ENCODE measurements at regions of chr4 and their contacts with region 1.

Region 1: GRCh38 chr4:80365928-80366327 is 30.4 kb downstream of the CFAP299 start:
- DNase-seq: peak in 1 of 2 experiments; percentile 53
- H3K4me3 ChIP-seq: no peak overlapping the region
- H3K4me3 Mint-ChIP-seq: no peak overlapping the region
- H3K27ac Mint-ChIP-seq: no peak overlapping the region
- H3K4me1 ChIP-seq: no peaks in the 10 kb centered on the region
- H3K4me1 Mint-ChIP-seq: no peaks in the 10 kb centered on the region
- H3K27me3 ChIP-seq: no peaks in the 10 kb centered on the region
- H3K27me3 Mint-ChIP-seq: peaks cover 2% of the 10 kb centered on the region
- CTCF ChIP-seq: peak; percentile 47 to 60

Region 2: DNA sequence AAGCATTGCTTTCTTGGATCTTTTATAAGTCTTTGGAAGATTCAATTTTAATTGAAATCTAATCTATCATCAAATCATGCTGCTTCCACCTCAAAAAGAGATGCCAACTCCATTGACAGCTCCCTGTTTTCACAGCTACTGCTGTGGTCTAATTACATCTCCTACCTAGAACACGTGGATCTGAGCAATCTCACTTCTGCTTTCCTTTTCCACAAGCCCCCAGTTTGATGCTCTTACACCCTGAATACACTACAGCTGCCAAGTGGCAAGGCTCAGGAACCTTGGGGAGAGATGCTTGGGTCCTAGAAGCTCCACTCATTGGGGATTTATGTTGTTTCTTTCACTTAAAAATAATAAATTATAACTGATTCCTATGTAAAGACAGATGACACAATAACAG is 141.6 kb after region 1 on chr4:
- CTCF ChIA-PET with region 1: no interaction called
- POLR2A ChIA-PET with region 1: no interaction called
- intact Hi-C with region 1: loop called (anchors 10 kb)
- DNase-seq: no peak
- H3K4me3 ChIP-seq: no peak overlapping the region
- H3K4me3 Mint-ChIP-seq: no peak overlapping the region
- H3K27ac Mint-ChIP-seq: no peak overlapping the region
- H3K4me1 ChIP-seq: no peaks in the 10 kb centered on the region
- H3K4me1 Mint-ChIP-seq: no peaks in the 10 kb centered on the region
- H3K27me3 ChIP-seq: no peaks in the 10 kb centered on the region
- H3K27me3 Mint-ChIP-seq: no peaks in the 10 kb centered on the region
- CTCF ChIP-seq: no peak

Region 3: GRCh38 chr4:80566203-80566872 is 200.4 kb after region 1 on chr4:
- CTCF ChIA-PET with region 1: no interaction called
- POLR2A ChIA-PET with region 1: no interaction called
- intact Hi-C with region 1: loop called (anchors 10 kb)
- DNase-seq: no peak
- H3K4me3 ChIP-seq: no peak overlapping the region
- H3K4me3 Mint-ChIP-seq: no peak overlapping the region
- H3K27ac Mint-ChIP-seq: no peak overlapping the region
- H3K4me1 ChIP-seq: no peaks in the 10 kb centered on the region
- H3K4me1 Mint-ChIP-seq: no peaks in the 10 kb centered on the region
- H3K27me3 ChIP-seq: no peaks in the 10 kb centered on the region
- H3K27me3 Mint-ChIP-seq: no peaks in the 10 kb centered on the region
- CTCF ChIP-seq: no peak

Region 4: GRCh38 chr4:80610845-80611677 is 245.1 kb after region 1 on chr4:
- CTCF ChIA-PET with region 1: no interaction called
- POLR2A ChIA-PET with region 1: no interaction called
- intact Hi-C with region 1: loop called (anchors 10 kb)
- DNase-seq: no peak
- H3K4me3 ChIP-seq: no peak overlapping the region
- H3K4me3 Mint-ChIP-seq: no peak overlapping the region
- H3K27ac Mint-ChIP-seq: no peak overlapping the region
- H3K4me1 ChIP-seq: no peaks in the 10 kb centered on the region
- H3K4me1 Mint-ChIP-seq: no peaks in the 10 kb centered on the region
- H3K27me3 ChIP-seq: no peaks in the 10 kb centered on the region
- H3K27me3 Mint-ChIP-seq: peaks cover 9% of the 10 kb centered on the region
- CTCF ChIP-seq: no peak

Region 5: DNA sequence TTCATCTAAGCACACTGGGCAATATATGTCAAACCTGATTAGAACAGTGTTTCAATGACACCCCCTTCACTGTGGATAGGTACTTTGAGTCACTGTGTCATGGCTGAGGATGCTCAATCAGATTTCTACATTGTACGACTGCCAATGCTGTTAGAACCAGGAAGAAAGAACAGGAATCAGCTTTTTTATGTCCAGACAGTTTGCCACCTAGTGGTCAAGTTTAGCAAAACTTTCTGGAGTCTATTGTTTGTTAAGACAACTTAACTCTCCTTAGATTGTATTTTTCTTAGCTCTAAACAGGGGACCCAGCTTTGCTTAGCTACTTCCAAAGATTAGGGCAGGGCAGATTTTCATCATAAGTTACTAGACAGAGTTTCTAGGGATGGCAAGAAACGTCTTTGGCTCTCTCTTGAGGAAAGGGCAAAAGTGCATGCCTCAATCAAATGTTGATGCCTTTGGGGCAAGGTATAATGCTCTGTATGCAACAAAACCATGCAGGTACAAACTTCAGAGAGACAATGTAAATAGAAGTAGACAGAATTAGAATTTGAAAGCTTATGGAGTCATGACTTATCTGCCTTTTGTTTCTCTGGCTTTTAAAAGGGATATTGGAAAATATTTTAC is 624.1 kb after region 1 on chr4:
- CTCF ChIA-PET with region 1: interaction called, 3 read pairs
- POLR2A ChIA-PET with region 1: no interaction called
- intact Hi-C with region 1: loop called (anchors 1 kb)
- DNase-seq: peak in 1 of 2 experiments; percentile 43
- H3K4me3 ChIP-seq: no peak overlapping the region
- H3K4me3 Mint-ChIP-seq: no peak overlapping the region
- H3K27ac Mint-ChIP-seq: no peak overlapping the region
- H3K4me1 ChIP-seq: no peaks in the 10 kb centered on the region
- H3K4me1 Mint-ChIP-seq: no peaks in the 10 kb centered on the region
- H3K27me3 ChIP-seq: no peaks in the 10 kb centered on the region
- H3K27me3 Mint-ChIP-seq: peaks cover 9% of the 10 kb centered on the region
- CTCF ChIP-seq: peak; percentile 63 to 64

Region 6: DNA sequence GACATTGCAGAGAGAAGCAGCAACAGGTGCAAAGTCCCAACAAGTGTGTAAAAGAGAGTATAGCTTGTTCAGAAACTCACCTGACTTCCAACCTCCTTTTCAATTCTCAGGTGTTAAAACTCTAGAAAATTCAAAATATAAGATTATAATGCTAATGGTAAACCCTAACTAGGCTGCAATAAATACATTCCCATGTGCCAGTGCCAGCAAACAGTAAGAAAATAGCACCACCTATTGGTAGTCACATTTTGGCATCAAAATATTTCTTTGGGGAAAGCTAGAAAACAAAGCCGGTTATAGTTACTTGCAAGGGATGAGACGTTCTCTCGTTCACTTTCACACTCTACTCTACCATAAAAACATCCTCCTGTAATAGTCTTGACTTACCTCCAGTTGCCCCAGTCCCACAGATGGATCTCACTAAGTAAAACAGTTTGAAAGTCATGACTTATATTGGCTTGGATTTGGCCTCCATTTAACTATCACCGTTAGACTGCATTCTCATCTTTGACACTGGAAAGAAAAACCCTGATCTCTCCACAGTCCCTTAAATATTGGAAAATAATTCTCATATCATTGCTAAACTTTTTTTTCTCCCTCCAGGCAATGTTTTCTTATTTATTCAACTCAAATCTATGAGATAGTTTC is 674.2 kb after region 1 on chr4:
- CTCF ChIA-PET with region 1: interaction called, 5 read pairs
- POLR2A ChIA-PET with region 1: no interaction called
- intact Hi-C with region 1: loop called (anchors 1 kb)
- DNase-seq: peak in 1 of 2 experiments; percentile 20
- H3K4me3 ChIP-seq: no peak overlapping the region
- H3K4me3 Mint-ChIP-seq: no peak overlapping the region
- H3K27ac Mint-ChIP-seq: no peak overlapping the region
- H3K4me1 ChIP-seq: no peaks in the 10 kb centered on the region
- H3K4me1 Mint-ChIP-seq: no peaks in the 10 kb centered on the region
- H3K27me3 ChIP-seq: no peaks in the 10 kb centered on the region
- H3K27me3 Mint-ChIP-seq: peaks cover 2% of the 10 kb centered on the region
- CTCF ChIP-seq: peak; percentile 39 to 55

Region 7: DNA sequence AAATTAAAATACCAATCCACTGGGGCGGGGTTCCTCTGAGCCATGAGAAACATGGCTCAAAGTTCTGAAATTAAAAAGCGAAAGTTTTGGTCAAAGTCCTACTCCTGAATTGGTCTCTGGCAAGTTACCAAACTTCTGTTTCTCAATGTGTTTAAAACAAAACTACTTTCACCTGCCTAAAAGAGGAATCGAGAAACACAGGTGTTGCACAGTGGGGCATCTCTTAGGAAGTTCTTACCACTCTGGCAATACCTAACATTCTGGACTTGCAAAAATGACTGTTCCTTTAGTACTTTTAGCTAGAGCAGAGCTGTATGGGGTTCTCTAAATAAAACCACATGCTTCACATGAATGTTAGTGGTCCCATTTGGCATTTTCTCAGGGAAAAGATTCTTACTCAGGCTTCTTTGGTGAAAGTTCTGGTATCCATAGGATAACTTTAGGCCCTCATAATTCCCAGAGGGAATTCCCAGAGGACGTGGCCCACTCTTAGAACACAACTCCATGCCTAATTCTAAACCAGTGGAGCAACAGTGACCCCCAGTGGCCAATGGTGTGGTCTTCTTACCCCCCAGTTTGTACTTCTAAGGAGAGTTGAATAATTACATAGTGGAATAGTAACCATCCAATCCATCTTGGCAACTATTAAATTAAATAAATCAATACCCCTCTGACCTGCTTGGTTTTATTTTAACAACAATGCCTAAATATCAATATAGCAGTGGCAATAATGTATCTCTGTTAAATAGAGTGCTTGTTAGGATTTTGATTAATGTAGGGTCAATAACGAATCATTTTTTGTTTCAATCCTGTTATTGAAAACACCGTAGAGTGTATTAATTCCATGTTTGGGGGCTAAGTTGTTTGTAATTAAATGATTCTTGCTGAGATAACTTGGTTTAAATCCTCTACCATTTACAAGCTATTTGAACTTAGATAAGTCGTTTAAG is 686.5 kb after region 1 on chr4:
- CTCF ChIA-PET with region 1: interaction called, 3 read pairs
- POLR2A ChIA-PET with region 1: no interaction called
- intact Hi-C with region 1: loop called (anchors 1 kb)
- DNase-seq: peak; percentile 58 to 65
- H3K4me3 ChIP-seq: no peak overlapping the region
- H3K4me3 Mint-ChIP-seq: no peak overlapping the region
- H3K27ac Mint-ChIP-seq: no peak overlapping the region
- H3K4me1 ChIP-seq: no peaks in the 10 kb centered on the region
- H3K4me1 Mint-ChIP-seq: no peaks in the 10 kb centered on the region
- H3K27me3 ChIP-seq: no peaks in the 10 kb centered on the region
- H3K27me3 Mint-ChIP-seq: peaks cover 8% of the 10 kb centered on the region
- CTCF ChIP-seq: peak; percentile 68 to 71